ENCODE measurements at regions of chr12 and their contacts with region 1.

Region 1: DNA sequence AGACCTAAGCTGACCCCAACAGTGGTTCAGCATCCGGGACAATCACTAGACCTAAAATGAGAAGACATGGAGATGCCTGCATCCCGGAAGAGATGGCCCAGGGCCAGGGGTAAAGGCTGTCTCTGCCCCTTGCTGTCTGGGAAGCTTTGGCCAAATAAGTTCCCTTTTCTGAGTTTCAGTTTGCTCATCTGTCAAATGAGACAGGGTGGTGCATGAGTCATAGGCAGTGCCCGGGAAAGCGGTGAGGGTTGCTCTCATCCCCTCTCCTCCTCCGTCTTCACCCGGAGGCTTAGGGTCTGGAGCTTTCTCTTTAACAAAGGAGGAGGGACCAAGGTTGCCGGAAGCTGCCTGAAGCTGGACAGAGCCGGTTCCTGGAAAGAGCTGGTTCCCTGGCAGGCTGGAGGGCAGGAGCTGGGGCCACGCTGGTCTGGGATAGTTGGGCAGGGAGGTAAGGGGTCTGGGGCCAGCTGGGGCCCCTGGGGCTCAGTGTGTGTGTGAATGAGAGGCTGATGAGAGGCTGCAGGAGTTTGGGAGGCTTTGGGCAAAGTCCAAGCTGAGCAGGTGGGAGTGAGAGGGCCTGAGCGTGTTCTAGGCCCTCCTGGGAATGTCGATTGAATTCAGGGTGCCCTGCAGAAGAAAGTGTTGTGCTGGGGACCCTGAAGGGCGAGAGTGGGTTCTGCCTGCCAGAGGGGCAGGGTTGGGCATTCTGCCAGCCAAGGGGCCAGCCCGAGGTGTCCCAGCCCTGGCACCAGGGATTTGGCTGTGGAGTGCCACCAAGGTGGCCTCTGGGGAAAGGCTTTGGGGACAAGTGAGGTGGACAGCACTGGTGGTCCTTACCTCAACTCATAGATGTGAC is at the start of gene SDSL:
- DNase-seq: peak; percentile 75
- H3K4me3 ChIP-seq: peak within 1 kb of the TSS; percentile 54 to 73
- H3K27ac ChIP-seq: peak within 1 kb of the TSS; percentile 64 to 67
- H3K4me1 ChIP-seq: peaks cover 0 to 5% of the 10 kb centered on the region in 2 experiments; a peak in 1 of 4 replicates
- H3K27me3 ChIP-seq: no peaks in the 10 kb centered on the region
- CTCF ChIP-seq: no peak
- EP300 ChIP-seq: no peak; a peak in 1 of 4 replicates
- RAD21 ChIP-seq: no peak
- polyA plus RNA-seq, gene SDSL: 32.4 and 33.7 TPM in 2 replicates

Region 2: GRCh38 chr12:113203852-113204760 is 218.2 kb before region 1 on chr12:
- CTCF ChIA-PET with region 1: interaction called, 14 read pairs
- POLR2A ChIA-PET with region 1: no interaction called
- DNase-seq: no peak
- H3K4me3 ChIP-seq: no peak overlapping the region
- H3K27ac ChIP-seq: no peak overlapping the region
- H3K4me1 ChIP-seq: peaks cover 0 to 10% of the 10 kb centered on the region in 2 experiments; a peak in 1 of 4 replicates
- H3K27me3 ChIP-seq: no peaks in the 10 kb centered on the region
- CTCF ChIP-seq: no peak
- EP300 ChIP-seq: no peak
- RAD21 ChIP-seq: no peak

Region 3: GRCh38 chr12:113407931-113408600 is 14.2 kb before region 1 on chr12:
- CTCF ChIA-PET with region 1: interaction called, 18 read pairs
- POLR2A ChIA-PET with region 1: no interaction called
- DNase-seq: no peak
- H3K4me3 ChIP-seq: no peak overlapping the region
- H3K27ac ChIP-seq: peak overlapping the region in 1 of 2 experiments; percentile 36; a peak in 1 of 4 replicates
- H3K4me1 ChIP-seq: no peaks in the 10 kb centered on the region; a peak in 1 of 4 replicates
- H3K27me3 ChIP-seq: no peaks in the 10 kb centered on the region
- CTCF ChIP-seq: no peak
- EP300 ChIP-seq: no peak
- RAD21 ChIP-seq: no peak

Region 4: DNA sequence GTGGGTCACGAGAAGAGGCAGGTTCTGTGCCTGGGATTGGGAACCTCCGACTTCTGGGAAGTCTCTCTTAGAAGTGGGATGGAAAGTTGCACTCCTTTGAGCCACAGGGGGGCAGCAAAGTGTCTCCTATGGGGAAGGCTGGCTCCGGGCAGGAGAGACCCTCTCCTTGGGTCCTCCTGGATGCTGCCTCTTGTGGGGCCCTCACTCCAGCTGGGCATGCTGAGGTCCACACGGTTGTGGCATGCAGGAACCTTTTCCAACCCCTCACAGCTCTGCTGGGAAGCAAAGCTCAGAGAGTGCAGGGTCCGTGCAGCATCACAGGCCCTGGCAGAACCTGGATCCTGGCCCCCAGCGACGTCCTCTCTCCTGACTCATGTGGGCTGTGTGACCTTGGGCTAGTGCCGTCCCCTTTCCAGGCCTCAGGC is 17.4 kb after region 1 on chr12:
- CTCF ChIA-PET with region 1: interaction called, 19 read pairs
- POLR2A ChIA-PET with region 1: interaction called, 3 read pairs
- DNase-seq: peak; percentile 80
- H3K4me3 ChIP-seq: no peak overlapping the region
- H3K27ac ChIP-seq: no peak overlapping the region
- H3K4me1 ChIP-seq: no peaks in the 10 kb centered on the region
- H3K27me3 ChIP-seq: no peaks in the 10 kb centered on the region
- CTCF ChIP-seq: peak; percentile 72
- EP300 ChIP-seq: no peak
- RAD21 ChIP-seq: peak; percentile 76

Region 5: DNA sequence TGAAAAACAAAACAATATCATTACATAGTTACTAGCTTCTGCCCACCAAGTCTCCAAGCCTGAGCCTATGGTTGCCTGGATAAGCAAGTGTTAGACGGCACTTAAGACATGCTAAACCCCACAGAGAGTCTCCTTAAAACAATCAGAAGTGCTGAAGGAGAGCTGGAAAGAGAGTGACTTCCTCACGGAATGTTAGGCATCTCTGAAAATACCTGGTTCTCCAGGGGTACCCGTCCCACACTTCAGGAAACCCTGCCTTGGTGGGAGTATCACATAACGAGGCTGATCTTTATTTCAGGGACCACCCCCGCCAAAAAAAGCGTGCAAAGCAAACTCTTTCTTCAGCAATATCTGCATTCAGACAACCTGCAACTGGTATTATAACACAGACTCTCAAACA is 31.1 kb after region 1 on chr12:
- CTCF ChIA-PET with region 1: interaction called, 10 read pairs
- POLR2A ChIA-PET with region 1: no interaction called
- DNase-seq: no peak
- H3K4me3 ChIP-seq: no peak overlapping the region
- H3K27ac ChIP-seq: no peak overlapping the region
- H3K4me1 ChIP-seq: no peaks in the 10 kb centered on the region; a peak in 1 of 4 replicates
- H3K27me3 ChIP-seq: peaks cover 19% of the 10 kb centered on the region; the same call in 1 of the 2 replicates
- CTCF ChIP-seq: no peak
- EP300 ChIP-seq: no peak
- RAD21 ChIP-seq: no peak